H1 (cell line): ENCODE measurements at regions of chr13 and their contacts with region 1.

Region 1: DNA sequence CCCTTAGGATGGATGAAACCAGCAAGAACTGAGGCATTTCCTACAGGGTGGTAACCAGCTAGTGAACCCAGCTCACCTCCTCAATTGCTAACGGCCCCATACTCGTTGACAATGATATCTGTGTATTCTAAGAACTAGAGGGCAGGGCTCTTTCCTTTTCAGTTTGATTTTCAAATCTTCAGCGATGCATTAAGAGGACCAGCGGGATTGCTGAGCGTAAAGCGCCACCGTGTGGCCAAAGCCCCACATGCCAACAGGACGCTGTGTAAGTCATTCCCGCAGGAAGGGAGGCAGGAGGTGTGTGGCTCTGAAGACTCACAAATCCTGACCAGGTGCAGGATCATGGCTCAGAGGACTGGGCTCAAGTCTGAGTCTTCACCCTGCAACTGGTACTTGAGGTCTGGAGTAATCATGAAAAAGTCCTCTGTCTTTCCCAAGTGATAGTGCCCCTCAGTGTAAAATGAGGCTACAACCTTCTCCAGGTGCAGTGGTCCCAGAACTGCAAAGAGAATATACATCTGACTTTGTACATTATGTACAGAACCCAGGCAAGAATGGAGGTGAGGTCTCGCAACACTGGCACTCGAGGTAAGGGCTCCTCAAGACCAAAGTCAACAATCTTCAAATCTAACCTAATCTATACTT is 40.9 kb downstream of the C13orf42 start:
- DNase-seq: peak; percentile 78 to 96
- H3K4me3 ChIP-seq: no peak overlapping the region
- H3K27ac ChIP-seq: no peak overlapping the region
- H3K4me1 ChIP-seq: peaks cover 0 to 3% (median 2%) of the 10 kb centered on the region in 4 experiments; a peak in 3 of 7 replicates
- H3K27me3 ChIP-seq: no peaks in the 10 kb centered on the region; a peak in 1 of 7 replicates
- CTCF ChIP-seq: peak; percentile 92 to 100 (median 95)
- EP300 ChIP-seq: no peak
- POLR2A ChIP-seq: no peak
- RAD21 ChIP-seq: peak; percentile 100

Region 2: GRCh38 chr13:50911937-50912795 is 158.0 kb before region 1 on chr13:
- CTCF ChIA-PET with region 1: interaction called, 10 read pairs
- POLR2A ChIA-PET with region 1: interaction called, 3 read pairs
- DNase-seq: peak; percentile 79 to 95
- H3K4me3 ChIP-seq: peak overlapping the region in 1 of 4 experiments; percentile 69; a peak in 1 of 8 replicates
- H3K27ac ChIP-seq: no peak overlapping the region
- H3K4me1 ChIP-seq: peaks cover 10 to 21% (median 15%) of the 10 kb centered on the region in 4 experiments; a peak in 6 of 7 replicates
- H3K27me3 ChIP-seq: no peaks in the 10 kb centered on the region
- CTCF ChIP-seq: peak; percentile 69 to 90 (median 88)
- EP300 ChIP-seq: peak in 1 of 2 experiments; percentile 97; a peak in 1 of 3 replicates
- POLR2A ChIP-seq: no peak
- RAD21 ChIP-seq: peak; percentile 96 to 98

Region 3: DNA sequence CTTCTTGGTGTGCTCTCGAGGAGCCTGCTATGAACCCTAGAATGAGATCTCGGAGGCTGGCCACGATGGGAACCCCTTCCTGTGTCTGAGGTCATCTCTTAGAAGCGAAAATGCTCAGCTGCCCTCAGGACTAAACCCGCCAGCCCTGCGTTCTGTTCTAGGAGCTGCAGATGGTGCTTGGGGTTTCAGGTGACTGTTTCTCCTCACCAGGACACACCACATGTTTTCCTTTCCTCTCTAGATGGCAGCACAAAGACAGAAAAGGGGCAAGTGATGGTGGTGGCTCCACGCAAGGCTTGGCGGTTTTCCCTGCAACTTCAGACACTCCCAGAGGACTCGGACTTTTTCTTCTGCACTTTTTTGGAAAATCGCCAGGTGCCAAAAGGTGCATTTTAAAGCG is 100.4 kb before region 1 on chr13:
- CTCF ChIA-PET with region 1: interaction called, 44 read pairs
- POLR2A ChIA-PET with region 1: interaction called, 4 read pairs
- DNase-seq: peak in 1 of 2 experiments; percentile 57
- H3K4me3 ChIP-seq: no peak overlapping the region
- H3K27ac ChIP-seq: no peak overlapping the region
- H3K4me1 ChIP-seq: no peaks in the 10 kb centered on the region
- H3K27me3 ChIP-seq: no peaks in the 10 kb centered on the region
- CTCF ChIP-seq: peak; percentile 29 to 62 (median 60)
- EP300 ChIP-seq: no peak
- POLR2A ChIP-seq: no peak
- RAD21 ChIP-seq: peak; percentile 70 to 76

Region 4: DNA sequence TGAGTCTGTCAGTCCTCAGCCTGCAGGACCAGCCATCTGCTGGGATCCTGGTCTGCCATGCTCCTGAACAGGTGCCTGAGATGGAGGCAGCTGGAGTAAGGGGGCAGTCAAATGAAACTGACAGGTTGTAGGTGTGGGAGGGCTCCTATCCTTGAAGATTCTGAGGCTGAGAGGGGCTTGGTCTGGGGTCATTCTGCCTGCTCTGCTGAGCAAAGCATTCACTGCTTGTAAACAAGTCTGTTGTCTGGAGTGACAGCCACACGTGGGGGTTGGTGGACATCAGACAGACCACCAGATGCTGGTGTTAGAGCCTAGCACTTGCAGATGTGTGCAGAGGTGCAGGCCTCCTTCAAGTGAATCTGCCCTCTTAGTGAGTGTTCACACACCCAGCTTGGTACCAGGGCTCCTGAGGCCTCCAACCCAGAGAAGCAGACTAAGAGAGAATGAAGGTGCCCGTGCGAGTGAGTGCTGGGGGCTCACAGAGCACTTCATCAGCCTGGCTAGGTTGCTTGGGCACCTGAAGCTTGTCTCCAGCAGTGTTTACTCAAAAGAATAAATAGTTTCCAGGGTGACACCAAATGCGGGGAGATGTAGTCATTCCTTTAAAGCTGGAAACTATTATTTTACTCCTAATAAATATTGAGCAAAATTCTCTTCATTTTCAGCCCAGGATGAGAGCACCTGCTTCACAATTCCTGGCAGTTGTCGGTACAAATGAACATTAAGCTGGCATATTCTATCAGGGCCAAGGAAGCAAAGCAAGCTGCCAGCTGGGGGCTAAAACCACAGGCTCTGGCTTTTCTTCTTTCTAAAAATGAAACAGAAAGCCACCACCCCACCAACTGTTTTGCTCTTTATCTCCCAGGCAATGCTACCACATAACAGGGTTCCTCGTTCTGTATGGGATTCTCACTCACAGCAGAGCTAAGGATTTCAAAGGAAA is 78.3 kb before region 1 on chr13:
- CTCF ChIA-PET with region 1: interaction called, 25 read pairs
- POLR2A ChIA-PET with region 1: no interaction called
- DNase-seq: no peak
- H3K4me3 ChIP-seq: no peak overlapping the region
- H3K27ac ChIP-seq: no peak overlapping the region
- H3K4me1 ChIP-seq: peaks cover 0 to 12% (median 8%) of the 10 kb centered on the region in 4 experiments
- H3K27me3 ChIP-seq: peaks cover 0 to 7% (median 5%) of the 10 kb centered on the region in 4 experiments; a peak in 3 of 7 replicates
- CTCF ChIP-seq: no peak
- EP300 ChIP-seq: no peak
- POLR2A ChIP-seq: no peak
- RAD21 ChIP-seq: no peak

Region 5: GRCh38 chr13:51044023-51044665 is 26.0 kb before region 1 on chr13:
- CTCF ChIA-PET with region 1: interaction called, 17 read pairs
- POLR2A ChIA-PET with region 1: no interaction called
- DNase-seq: peak in 1 of 2 experiments; percentile 46
- H3K4me3 ChIP-seq: no peak overlapping the region
- H3K27ac ChIP-seq: no peak overlapping the region
- H3K4me1 ChIP-seq: no peaks in the 10 kb centered on the region
- H3K27me3 ChIP-seq: no peaks in the 10 kb centered on the region
- CTCF ChIP-seq: peak; percentile 31 to 49 (median 39); a peak in 2 of 4 replicates
- EP300 ChIP-seq: no peak
- POLR2A ChIP-seq: no peak
- RAD21 ChIP-seq: peak; percentile 25 to 49; a peak in 2 of 4 replicates

Region 6: GRCh38 chr13:51058461-51059167 is 11.5 kb before region 1 on chr13:
- CTCF ChIA-PET with region 1: interaction called, 50 read pairs
- POLR2A ChIA-PET with region 1: interaction called, 3 read pairs
- DNase-seq: peak in 1 of 2 experiments; percentile 38
- H3K4me3 ChIP-seq: no peak overlapping the region
- H3K27ac ChIP-seq: no peak overlapping the region
- H3K4me1 ChIP-seq: peaks cover 0 to 6% (median 2%) of the 10 kb centered on the region in 4 experiments; a peak in 3 of 7 replicates
- H3K27me3 ChIP-seq: no peaks in the 10 kb centered on the region
- CTCF ChIP-seq: no peak
- EP300 ChIP-seq: no peak
- POLR2A ChIP-seq: no peak
- RAD21 ChIP-seq: no peak